ENCODE measurements at regions of chr4 and their contacts with region 1.

Region 1: GRCh38 chr4:123573866-123574508 is 177.4 kb downstream of the SPRY1 start:
- DNase-seq: no peak
- ATAC-seq: no peak
- H3K4me3 Mint-ChIP-seq: no peak overlapping the region
- H3K27ac Mint-ChIP-seq: no peak overlapping the region
- H3K4me1 Mint-ChIP-seq: no peaks in the 10 kb centered on the region
- H3K27me3 Mint-ChIP-seq: no peaks in the 10 kb centered on the region

Region 2: GRCh38 chr4:123158576-123158975 is 415.4 kb before region 1 on chr4:
- CTCF ChIA-PET with region 1: no interaction called
- POLR2A ChIA-PET with region 1: no interaction called
- intact Hi-C with region 1: no loop called
- DNase-seq: no peak
- ATAC-seq: no peak
- H3K4me3 Mint-ChIP-seq: no peak overlapping the region
- H3K27ac Mint-ChIP-seq: no peak overlapping the region
- H3K4me1 Mint-ChIP-seq: no peaks in the 10 kb centered on the region
- H3K27me3 Mint-ChIP-seq: no peaks in the 10 kb centered on the region

Region 3: GRCh38 chr4:123588631-123589241 is 14.7 kb after region 1 on chr4:
- CTCF ChIA-PET with region 1: interaction called, 3 read pairs
- POLR2A ChIA-PET with region 1: no interaction called
- intact Hi-C with region 1: loop called in 1 of 2 experiments (anchors 1 kb)
- DNase-seq: no peak
- ATAC-seq: no peak
- H3K4me3 Mint-ChIP-seq: no peak overlapping the region
- H3K27ac Mint-ChIP-seq: no peak overlapping the region
- H3K4me1 Mint-ChIP-seq: no peaks in the 10 kb centered on the region
- H3K27me3 Mint-ChIP-seq: no peaks in the 10 kb centered on the region